ENCODE measurements at regions of chr10 and their contacts with region 1.

Region 1: GRCh38 chr10:72097448-72098300 is 9.3 kb upstream of the SPOCK2 start:
- DNase-seq: no peak
- H3K4me3 Mint-ChIP-seq: peak overlapping the region; percentile 22
- H3K27ac Mint-ChIP-seq: peak overlapping the region; percentile 86
- H3K4me1 Mint-ChIP-seq: peaks cover 59% of the 10 kb centered on the region
- H3K27me3 Mint-ChIP-seq: no peaks in the 10 kb centered on the region

Region 2: DNA sequence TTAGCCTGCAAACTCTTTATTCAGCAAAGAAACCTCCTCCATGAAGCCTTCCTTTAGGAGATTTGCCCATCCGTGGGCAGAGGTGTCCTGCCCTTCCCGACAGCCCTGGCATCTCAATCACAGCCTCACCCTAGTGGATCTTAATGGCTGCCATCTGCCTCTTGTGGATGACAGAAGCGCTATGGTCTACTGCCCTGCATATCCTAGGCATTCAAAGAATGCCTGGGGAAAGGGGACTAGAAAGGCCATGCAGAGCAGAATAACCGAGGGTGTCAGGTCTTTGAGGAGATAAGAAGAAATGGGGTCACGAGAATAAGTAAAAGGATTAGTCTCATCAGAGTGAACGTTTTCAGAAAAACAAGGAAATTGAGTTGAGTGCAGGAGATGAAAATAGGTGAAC is 48.4 kb after region 1 on chr10:
- intact Hi-C with region 1: loop called (anchors 5 kb)
- DNase-seq: no peak
- H3K4me3 Mint-ChIP-seq: no peak overlapping the region
- H3K27ac Mint-ChIP-seq: no peak overlapping the region
- H3K4me1 Mint-ChIP-seq: peaks cover 26% of the 10 kb centered on the region
- H3K27me3 Mint-ChIP-seq: no peaks in the 10 kb centered on the region

Region 3: DNA sequence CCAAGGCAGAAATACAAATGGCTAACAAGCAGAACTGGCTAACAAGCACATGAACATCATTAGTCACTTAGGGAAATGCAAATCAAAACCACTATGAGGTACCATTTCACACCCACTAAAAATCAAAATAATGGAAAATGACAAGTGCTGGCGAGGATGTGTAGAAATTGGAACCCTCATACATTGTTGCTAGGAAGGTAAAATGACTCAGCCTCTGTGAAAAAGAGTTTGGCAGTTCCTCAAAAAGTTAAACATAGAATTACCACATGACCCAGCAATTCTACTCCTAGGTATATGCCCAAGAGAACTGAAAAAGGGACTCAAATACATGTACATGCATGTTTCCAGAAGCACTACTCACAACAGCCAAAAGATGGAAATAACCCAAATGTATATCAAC is 65.3 kb after region 1 on chr10:
- intact Hi-C with region 1: loop called (anchors 2 kb)
- DNase-seq: no peak
- H3K4me3 Mint-ChIP-seq: no peak overlapping the region
- H3K27ac Mint-ChIP-seq: peak overlapping the region; percentile 76
- H3K4me1 Mint-ChIP-seq: peaks cover 28% of the 10 kb centered on the region
- H3K27me3 Mint-ChIP-seq: no peaks in the 10 kb centered on the region

Region 4: DNA sequence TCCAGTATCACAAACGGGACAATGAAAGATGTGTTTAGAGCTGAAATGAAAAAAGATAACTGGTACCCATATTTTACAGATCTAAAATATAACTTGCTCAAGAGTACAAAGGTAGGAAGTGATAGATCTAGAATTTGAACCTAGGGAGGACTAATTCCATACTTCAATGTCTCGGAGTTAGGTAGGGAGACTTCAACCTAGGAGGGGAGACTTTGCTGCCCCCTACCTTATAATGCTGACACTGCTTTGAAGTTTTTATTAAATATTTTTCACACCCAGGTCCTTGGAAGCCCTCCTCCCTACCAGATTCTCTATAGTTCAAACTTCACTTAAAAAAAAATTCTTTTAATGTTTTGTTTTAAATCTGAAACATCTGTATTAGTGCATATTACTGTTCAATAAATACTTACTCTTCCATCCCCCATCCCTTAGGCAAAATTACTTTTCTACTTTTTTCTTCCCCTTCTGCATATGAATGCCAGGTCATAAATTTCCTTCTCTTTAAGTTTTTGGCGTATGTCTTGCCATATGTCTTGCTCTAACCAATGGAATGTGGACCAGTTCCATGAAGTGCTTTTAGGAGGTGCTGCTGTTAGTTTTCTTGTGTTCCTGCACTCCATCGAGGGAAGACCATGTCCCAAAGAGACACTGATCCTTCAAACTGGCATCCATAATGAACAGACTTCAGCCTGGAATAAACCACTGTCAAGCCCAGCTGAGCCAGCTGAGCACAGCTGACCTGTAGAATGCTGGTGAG is 470.4 kb after region 1 on chr10:
- intact Hi-C with region 1: loop called (anchors 10 kb)
- DNase-seq: no peak
- H3K4me3 Mint-ChIP-seq: no peak overlapping the region
- H3K27ac Mint-ChIP-seq: no peak overlapping the region
- H3K4me1 Mint-ChIP-seq: peaks cover 16% of the 10 kb centered on the region
- H3K27me3 Mint-ChIP-seq: no peaks in the 10 kb centered on the region